Calu3 (cell line): ENCODE measurements at regions of chr2 and their contacts with region 1.

Region 1: DNA sequence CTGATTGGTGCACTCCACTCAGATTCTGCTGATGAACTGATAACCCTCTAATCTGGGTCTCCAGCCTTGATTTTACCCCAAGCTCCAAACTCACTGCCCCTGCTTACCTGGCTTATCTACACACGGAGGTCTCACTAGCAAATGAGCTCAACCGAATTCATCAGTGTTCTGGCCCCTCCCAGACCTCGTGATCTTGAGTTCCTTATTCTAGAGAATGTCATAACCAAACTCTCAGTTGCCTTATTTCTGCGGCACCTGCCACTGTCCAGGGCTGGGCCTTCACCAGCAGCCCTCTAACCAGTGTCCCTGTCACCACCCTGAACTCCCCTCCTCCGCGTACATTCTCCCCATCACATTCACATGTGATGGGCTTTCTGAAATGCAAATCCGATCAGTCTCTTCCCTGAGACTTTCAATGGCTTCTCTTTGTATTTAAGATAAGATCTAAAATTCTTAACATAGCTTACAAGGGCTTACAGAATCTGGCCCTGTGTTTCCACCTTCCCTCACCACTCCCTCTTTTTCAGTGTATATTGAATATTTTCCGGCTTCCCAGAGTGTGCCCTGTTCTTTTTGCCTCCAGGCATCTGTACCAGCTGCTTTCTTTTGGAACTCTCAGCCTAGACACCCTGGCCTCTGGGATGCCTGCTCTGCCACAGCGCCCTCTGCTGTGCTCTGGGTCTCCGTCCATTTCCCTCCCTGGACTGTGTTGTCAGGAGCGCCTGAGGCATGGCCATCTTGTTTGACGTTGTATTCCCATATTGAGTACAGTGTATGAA is 31.1 kb downstream of the NAB1 start:
- DNase-seq: peak; percentile 69
- H3K4me3 Mint-ChIP-seq: no peak overlapping the region
- H3K27ac Mint-ChIP-seq: peak overlapping the region; percentile 24
- H3K4me1 Mint-ChIP-seq: peaks cover 13% of the 10 kb centered on the region
- H3K27me3 Mint-ChIP-seq: no peaks in the 10 kb centered on the region
- CTCF ChIP-seq: peak; percentile 51

Region 2: GRCh38 chr2:190404487-190404886 is 275.5 kb before region 1 on chr2:
- CTCF ChIA-PET with region 1: no interaction called
- intact Hi-C with region 1: no loop called
- DNase-seq: peak; percentile 23
- H3K4me3 Mint-ChIP-seq: no peak overlapping the region
- H3K27ac Mint-ChIP-seq: no peak overlapping the region
- H3K4me1 Mint-ChIP-seq: peaks cover 3% of the 10 kb centered on the region
- H3K27me3 Mint-ChIP-seq: no peaks in the 10 kb centered on the region
- CTCF ChIP-seq: no peak

Region 3: DNA sequence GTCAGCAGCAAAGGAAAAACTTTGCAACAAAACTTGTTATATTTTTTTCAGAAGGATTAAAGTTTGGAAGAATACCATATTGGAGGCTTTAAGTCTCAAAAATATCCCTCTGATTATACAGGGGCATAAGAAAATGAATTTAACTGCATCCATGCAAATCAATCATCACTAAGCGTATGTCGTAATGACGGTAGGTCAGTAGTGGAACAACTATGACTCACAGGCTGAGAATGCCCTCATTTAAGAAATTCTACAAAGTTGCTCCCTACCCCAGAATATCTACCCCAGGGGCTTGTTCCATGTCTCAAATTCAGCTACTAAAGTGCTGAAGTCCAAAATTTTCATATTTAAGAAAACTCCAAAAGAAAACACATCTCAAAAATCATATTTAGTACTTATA is 43.6 kb before region 1 on chr2:
- CTCF ChIA-PET with region 1: interaction called, 11 read pairs
- intact Hi-C with region 1: loop called (anchors 1 kb)
- DNase-seq: peak; percentile 28
- H3K4me3 Mint-ChIP-seq: no peak overlapping the region
- H3K27ac Mint-ChIP-seq: peak overlapping the region; percentile 9
- H3K4me1 Mint-ChIP-seq: peaks cover 26% of the 10 kb centered on the region
- H3K27me3 Mint-ChIP-seq: no peaks in the 10 kb centered on the region
- CTCF ChIP-seq: no peak